Uterus (tissue), 4 donors: ENCODE measurements at regions of chr14 and their contacts with region 1.

Region 1: DNA sequence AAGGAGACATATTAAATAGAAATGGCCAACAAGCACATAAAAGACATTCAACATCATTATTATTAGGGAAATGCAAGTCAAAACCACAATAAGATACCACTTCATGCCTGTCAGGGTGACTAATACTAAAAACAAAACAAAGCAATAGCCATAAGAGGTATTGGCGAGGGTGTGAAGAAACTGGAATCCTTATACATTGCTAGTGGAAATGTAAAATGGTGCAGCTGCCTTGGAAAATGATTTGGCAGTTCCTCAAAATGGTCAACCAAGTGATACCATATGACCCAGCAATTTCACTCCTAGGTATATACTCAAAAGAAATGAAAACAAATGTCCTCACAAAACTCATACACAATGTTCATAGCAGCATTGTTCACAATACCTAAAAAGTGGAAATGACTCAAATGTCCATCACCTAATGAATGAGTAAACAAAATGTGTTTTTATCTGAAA is 27.0 kb downstream of the GPR135 start:
- DNase-seq: no peak
- H3K4me3 ChIP-seq: no peak overlapping the region
- H3K27ac ChIP-seq: peak overlapping the region in 1 of 2 donors; percentile 24
- H3K4me1 ChIP-seq: no peaks in the 10 kb centered on the region
- H3K27me3 ChIP-seq: no peaks in the 10 kb centered on the region
- CTCF ChIP-seq: no peak
- POLR2A ChIP-seq: no peak

Region 2: DNA sequence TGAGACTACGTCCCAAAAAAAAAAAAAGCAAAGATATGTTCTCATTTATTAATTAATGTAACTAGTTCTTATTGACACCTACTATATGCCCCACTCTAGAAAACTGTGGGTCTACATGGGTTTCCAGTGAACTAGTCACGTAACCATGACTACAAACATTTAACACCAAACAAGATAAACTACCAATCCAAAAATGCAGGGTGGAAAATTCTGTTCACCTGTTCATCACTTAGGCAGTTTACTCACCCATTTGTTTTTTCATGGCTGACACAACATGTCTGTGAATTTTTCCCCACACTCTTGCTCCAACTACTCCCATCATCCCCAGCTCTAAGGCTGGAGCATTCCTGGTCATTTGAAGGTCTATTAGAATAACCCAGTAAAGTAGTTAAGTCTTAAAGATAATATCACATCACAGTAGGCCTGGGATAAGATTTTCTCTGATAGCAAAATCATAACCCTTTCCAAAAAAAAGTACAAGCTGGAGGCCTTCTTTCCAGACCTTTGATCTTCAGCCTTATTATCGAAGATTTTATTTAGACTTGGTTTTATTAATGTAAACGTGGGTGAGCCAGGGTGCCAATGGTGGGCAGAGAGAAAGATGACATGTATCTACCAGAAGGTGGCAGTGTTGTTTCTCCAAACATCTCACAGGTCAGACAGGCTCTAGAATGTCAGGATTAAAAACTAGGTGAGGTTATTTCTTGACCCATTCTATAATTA is 311.4 kb before region 1 on chr14:
- intact Hi-C with region 1: loop called (anchors 5 kb)
- DNase-seq: peak in 1 of 2 donors; percentile 37
- H3K4me3 ChIP-seq: no peak overlapping the region
- H3K27ac ChIP-seq: no peak overlapping the region
- H3K4me1 ChIP-seq: no peaks in the 10 kb centered on the region
- H3K27me3 ChIP-seq: no peaks in the 10 kb centered on the region
- CTCF ChIP-seq: peak; percentile 76 to 89 (median 82)
- POLR2A ChIP-seq: no peak

Region 3: DNA sequence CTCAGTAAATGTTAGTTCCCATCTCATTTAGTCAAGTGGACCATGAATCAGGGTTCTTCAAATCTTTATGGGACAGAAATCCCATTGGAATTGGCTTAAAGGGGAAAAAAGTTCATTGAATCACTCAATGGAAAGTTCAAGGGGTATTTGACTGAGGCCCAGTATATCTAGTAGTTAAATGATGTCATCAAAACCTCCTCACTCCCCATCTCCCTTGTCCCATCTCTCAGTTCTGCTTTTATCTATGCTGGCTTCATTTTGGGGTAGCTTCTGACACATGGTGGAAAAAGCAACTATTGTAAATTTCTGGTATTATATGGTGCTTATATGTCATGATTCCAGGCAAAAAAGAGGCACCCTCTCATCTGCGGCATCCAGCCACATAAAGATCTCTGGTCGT is 197.9 kb before region 1 on chr14:
- intact Hi-C with region 1: no loop called
- DNase-seq: no peak
- H3K4me3 ChIP-seq: no peak overlapping the region
- H3K27ac ChIP-seq: no peak overlapping the region
- H3K4me1 ChIP-seq: no peaks in the 10 kb centered on the region
- H3K27me3 ChIP-seq: no peaks in the 10 kb centered on the region
- CTCF ChIP-seq: no peak
- POLR2A ChIP-seq: no peak